GM23248 (cell line): ENCODE measurements at regions of chr6 and their contacts with region 1.

Region 1: GRCh38 chr6:106568530-106568929 is 60.8 kb downstream of the RTN4IP1 start:
- DNase-seq: peak; percentile 68
- H3K4me3 ChIP-seq: no peak overlapping the region
- H3K27ac ChIP-seq: no peak overlapping the region
- H3K4me1 ChIP-seq: peaks cover 17% of the 10 kb centered on the region
- H3K27me3 ChIP-seq: no peaks in the 10 kb centered on the region

Region 2: DNA sequence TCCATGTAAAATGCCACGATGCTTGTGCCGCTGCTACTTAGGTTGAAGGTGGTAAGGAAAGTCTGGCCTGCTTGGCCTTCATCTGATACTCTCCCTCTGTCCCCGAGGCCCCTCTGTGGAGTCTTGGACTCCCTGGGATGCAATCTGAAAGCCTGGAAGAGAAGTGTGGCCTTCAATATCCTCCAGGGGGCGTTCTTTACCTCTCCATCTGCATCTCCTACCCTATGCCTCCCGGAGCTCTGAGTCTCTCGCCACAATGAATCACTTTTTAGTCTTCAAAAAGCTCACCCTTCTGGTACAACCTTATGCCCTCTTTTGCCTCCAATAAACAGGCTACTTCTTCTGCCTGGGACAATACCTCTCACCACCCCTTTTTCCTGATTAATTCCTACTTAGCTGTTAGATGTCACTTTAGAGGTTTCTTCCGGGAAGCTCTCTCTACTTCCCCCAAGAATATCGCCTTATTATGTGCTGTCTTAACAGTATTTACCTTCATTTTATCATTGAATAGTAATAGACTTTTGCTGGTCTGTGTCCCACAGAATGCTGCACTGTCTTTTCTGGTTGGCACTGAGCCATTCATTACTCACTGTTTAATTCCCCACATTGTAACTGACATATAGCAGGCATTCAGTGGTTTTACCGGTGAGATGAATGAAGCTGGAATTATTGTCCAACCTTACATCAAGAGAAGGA is 229.0 kb before region 1 on chr6:
- in situ Hi-C with region 1: loop called (anchors 5 kb)
- DNase-seq: peak; percentile 91
- H3K4me3 ChIP-seq: no peak overlapping the region
- H3K27ac ChIP-seq: no peak overlapping the region
- H3K4me1 ChIP-seq: no peaks in the 10 kb centered on the region
- H3K27me3 ChIP-seq: peaks cover 7% of the 10 kb centered on the region; the same call in 1 of the 2 replicates

Region 3: DNA sequence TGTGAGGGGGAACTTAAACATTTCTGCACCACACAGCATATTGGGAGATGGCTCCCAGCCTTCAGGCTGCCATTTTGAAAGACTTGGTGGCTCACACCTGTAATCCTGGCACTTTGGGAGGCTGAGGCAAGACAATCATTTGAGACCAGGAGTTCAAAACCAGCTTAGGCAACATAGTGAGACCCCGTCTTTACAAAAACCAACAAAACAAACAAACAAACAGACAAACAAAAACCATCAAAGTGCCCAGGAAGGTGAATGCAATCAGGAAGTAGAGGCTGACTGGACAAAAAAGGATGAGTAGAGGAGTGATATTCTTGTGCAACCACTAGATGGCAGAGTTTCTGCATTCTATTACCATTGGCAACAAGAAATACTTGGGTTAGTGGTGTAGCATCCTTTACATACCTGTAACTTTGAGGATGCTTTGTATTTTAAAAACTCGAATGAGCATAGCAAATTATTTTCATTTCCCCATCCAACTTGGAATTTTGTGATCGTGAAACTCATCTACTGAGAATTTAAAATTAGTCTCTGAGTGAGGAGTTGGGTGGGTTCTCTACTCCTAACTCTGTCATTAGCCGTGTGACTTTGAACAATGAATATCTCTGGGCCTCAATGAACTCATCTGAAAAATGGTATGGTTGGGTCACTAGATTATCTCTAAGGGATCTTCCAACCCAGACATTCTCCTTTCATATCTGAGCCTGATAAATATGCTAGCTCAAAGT is 123.6 kb before region 1 on chr6:
- in situ Hi-C with region 1: loop called (anchors 5 kb)
- DNase-seq: peak; percentile 77
- H3K4me3 ChIP-seq: no peak overlapping the region
- H3K27ac ChIP-seq: no peak overlapping the region
- H3K4me1 ChIP-seq: no peaks in the 10 kb centered on the region
- H3K27me3 ChIP-seq: peaks cover 39% of the 10 kb centered on the region